Prostate gland (tissue), 2 donors: ENCODE measurements at regions of chr5 and their contacts with region 1.

Region 1: GRCh38 chr5:155943516-155944407 is 383.2 kb upstream of the SGCD start:
- DNase-seq: peak; percentile 17
- H3K4me3 ChIP-seq: no peak overlapping the region
- H3K27ac ChIP-seq: no peak overlapping the region
- H3K4me1 ChIP-seq: no peaks in the 10 kb centered on the region
- H3K27me3 ChIP-seq: no peaks in the 10 kb centered on the region
- CTCF ChIP-seq: peak; percentile 47 to 64 (median 54)
- POLR2A ChIP-seq: no peak

Region 2: GRCh38 chr5:156815988-156816599 is 872.3 kb after region 1 on chr5:
- intact Hi-C with region 1: loop called (anchors 2 kb)
- DNase-seq: no peak
- H3K4me3 ChIP-seq: no peak overlapping the region
- H3K27ac ChIP-seq: no peak overlapping the region
- H3K4me1 ChIP-seq: no peaks in the 10 kb centered on the region
- H3K27me3 ChIP-seq: no peaks in the 10 kb centered on the region
- CTCF ChIP-seq: peak in 2 of 4 experiments; percentile 27 to 33
- POLR2A ChIP-seq: no peak